Naive thymus-derived CD4-positive, alpha-beta T cell (primary cell): ENCODE measurements at regions of chr3 and their contacts with region 1.

Region 1: DNA sequence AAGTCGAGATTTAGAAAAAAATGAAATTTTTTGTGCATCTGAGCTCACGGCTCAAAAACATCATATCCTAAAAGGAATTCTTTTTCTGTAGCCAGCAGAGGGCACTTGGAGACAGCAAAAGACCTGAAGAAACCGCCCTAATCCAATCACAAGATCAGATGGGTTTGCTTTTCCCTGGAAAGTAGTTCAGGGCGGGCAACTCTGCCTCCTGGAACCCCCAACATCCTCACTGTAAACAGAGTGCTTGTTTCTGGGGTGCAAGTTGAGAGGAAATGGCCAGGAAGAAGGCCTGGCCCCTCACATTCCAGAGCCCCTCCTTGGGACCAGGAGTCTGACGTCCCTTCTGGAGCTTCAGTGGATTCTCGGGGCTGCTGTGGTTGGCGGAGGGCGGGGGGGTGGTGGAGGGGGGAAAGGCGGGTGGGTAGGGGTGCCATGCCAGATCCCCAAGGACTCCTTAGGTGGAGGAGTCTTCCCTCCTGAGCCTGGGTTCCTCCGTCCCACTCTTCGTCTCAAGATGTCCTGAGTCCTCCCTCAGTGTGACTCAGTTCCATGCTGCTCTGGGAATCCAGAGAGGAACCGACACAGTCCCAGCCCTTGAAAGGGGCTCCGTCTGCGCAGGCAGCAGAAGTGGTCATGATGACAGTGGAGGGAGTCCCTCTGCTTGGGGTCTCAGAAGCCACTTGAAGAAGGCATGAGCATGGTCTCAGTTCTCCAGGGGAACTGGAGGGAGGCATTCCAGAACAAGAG is 35.9 kb downstream of the CCK start:
- DNase-seq: no peak
- ATAC-seq: no peak
- H3K4me3 ChIP-seq: no peak overlapping the region
- H3K4me3 Mint-ChIP-seq: no peak overlapping the region
- H3K27ac ChIP-seq: no peak overlapping the region
- H3K27ac Mint-ChIP-seq: no peak overlapping the region
- H3K4me1 ChIP-seq: no peaks in the 10 kb centered on the region
- H3K4me1 Mint-ChIP-seq: peaks cover 0 to 3% (median 0%) of the 10 kb centered on the region in 7 donors
- H3K27me3 ChIP-seq: no peaks in the 10 kb centered on the region
- H3K27me3 Mint-ChIP-seq: peaks cover 11 to 20% (median 13%) of the 10 kb centered on the region in 5 donors

Region 2: DNA sequence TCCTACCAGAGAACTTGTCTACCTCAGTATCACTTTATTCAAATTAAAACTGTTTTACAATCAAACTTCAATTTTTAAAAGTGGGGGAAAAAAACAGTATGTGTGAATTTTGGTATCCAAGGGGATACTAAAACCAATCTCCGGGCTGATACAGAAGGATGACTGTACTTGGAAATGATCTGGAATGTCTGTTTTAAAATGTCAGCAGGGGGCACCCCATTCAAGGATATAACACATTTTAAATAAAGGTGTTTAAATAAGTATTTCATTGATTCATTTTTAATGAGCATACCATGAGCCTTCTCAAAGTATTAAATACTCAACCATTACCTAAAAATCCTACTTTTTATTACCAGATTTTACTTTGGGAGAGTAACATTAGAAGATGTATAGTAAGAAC is 336.1 kb before region 1 on chr3:
- CTCF ChIA-PET with region 1: no interaction called
- POLR2A ChIA-PET with region 1: no interaction called
- intact Hi-C with region 1: loop called in 1 of 2 experiments (anchors 1 kb)
- DNase-seq: peak in 6 of 9 donors; percentile 9 to 34 (median 17)
- ATAC-seq: no peak
- H3K4me3 ChIP-seq: no peak overlapping the region
- H3K4me3 Mint-ChIP-seq: no peak overlapping the region
- H3K27ac ChIP-seq: no peak overlapping the region
- H3K27ac Mint-ChIP-seq: no peak overlapping the region
- H3K4me1 ChIP-seq: no peaks in the 10 kb centered on the region
- H3K4me1 Mint-ChIP-seq: peaks cover 0 to 6% (median 0%) of the 10 kb centered on the region in 7 donors
- H3K27me3 ChIP-seq: no peaks in the 10 kb centered on the region
- H3K27me3 Mint-ChIP-seq: no peaks in the 10 kb centered on the region

Region 3: GRCh38 chr3:42118762-42119361 is 111.3 kb before region 1 on chr3:
- CTCF ChIA-PET with region 1: interaction called, 3 read pairs
- POLR2A ChIA-PET with region 1: interaction called, 3 read pairs
- intact Hi-C with region 1: loop called in 1 of 2 experiments (anchors 2 kb)
- DNase-seq: peak in 1 of 9 donors; percentile 11
- ATAC-seq: peak; percentile 27
- H3K4me3 ChIP-seq: no peak overlapping the region
- H3K4me3 Mint-ChIP-seq: no peak overlapping the region
- H3K27ac ChIP-seq: no peak overlapping the region
- H3K27ac Mint-ChIP-seq: peak overlapping the region in 3 of 9 donors; percentile 7 to 60 (median 51)
- H3K4me1 ChIP-seq: no peaks in the 10 kb centered on the region
- H3K4me1 Mint-ChIP-seq: peaks cover 6 to 36% (median 19%) of the 10 kb centered on the region in 7 donors
- H3K27me3 ChIP-seq: no peaks in the 10 kb centered on the region
- H3K27me3 Mint-ChIP-seq: no peaks in the 10 kb centered on the region

Region 4: GRCh38 chr3:42891042-42891441 is 660.9 kb after region 1 on chr3:
- CTCF ChIA-PET with region 1: no interaction called
- POLR2A ChIA-PET with region 1: no interaction called
- intact Hi-C with region 1: no loop called
- DNase-seq: no peak
- ATAC-seq: no peak
- H3K4me3 ChIP-seq: no peak overlapping the region
- H3K4me3 Mint-ChIP-seq: no peak overlapping the region
- H3K27ac ChIP-seq: no peak overlapping the region
- H3K27ac Mint-ChIP-seq: no peak overlapping the region
- H3K4me1 ChIP-seq: no peaks in the 10 kb centered on the region
- H3K4me1 Mint-ChIP-seq: peaks cover 0 to 5% (median 0%) of the 10 kb centered on the region in 7 donors
- H3K27me3 ChIP-seq: no peaks in the 10 kb centered on the region
- H3K27me3 Mint-ChIP-seq: peaks cover 6 to 32% (median 20%) of the 10 kb centered on the region in 5 donors